Panc1 (cell line): ENCODE measurements at regions of chr6 and their contacts with region 1.

Region 1: DNA sequence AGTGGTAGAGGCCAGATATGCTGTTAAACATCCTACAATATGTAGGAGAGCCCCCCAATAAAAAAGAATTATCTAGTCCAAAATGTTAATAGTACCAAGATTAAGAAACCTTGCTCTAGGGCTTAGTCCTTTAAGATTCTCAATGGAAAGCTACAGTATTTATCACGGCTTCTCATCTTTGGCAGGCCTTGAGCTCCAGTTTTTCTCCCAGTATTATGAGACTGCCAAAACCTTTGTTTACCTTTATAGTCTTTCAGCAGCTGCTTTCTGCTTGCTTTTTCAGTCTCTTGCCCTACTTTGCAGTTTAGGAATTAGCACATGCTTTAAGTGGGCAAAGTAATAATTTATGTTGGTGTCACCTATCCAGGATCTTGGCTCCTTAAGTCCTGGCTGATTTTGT is 59.7 kb downstream of the NHLRC1 start:
- DNase-seq: no peak
- ATAC-seq: no peak
- H3K4me3 ChIP-seq: no peak overlapping the region
- H3K27ac ChIP-seq: no peak overlapping the region; the same call in 1 of the 2 replicates
- H3K4me1 ChIP-seq: no peaks in the 10 kb centered on the region; the same call in 1 of the 2 replicates
- H3K27me3 ChIP-seq: no peaks in the 10 kb centered on the region
- CTCF ChIP-seq: no peak

Region 2: DNA sequence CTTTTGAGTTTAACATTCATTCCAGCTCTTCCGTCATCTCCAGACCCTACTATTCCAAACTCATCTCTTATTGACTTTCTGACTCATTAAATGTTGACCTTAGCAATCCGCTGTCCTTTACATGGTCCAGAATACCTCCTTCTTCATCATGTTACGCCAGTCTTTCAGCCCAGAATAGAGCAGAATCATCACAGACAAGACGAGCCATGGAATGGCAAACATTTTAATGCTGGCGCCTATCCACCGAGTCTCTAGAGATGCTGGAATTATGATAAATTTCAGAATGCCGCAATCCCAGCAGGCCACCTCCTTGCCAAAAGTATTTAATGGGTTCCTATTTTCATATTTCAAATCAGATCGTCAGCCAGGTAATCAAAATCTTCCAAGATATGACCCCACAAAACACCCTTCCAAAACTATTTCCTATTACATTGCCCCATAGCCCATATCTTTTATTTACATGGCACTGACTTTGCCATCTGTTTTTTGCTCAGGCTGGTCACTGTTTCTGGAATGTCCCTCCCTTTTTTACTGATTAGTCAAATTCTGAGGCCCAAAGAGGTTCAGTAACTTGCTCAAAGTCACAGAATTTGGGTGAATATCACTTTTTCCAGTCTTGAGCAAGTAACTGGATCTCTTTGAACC is 18.8 kb after region 1 on chr6:
- CTCF ChIA-PET with region 1: no interaction called
- POLR2A ChIA-PET with region 1: no interaction called
- in situ Hi-C with region 1: no loop called
- intact Hi-C with region 1: loop called (anchors 1 kb)
- DNase-seq: no peak
- ATAC-seq: no peak
- H3K4me3 ChIP-seq: no peak overlapping the region
- H3K27ac ChIP-seq: no peak overlapping the region
- H3K4me1 ChIP-seq: no peaks in the 10 kb centered on the region
- H3K27me3 ChIP-seq: no peaks in the 10 kb centered on the region
- CTCF ChIP-seq: no peak

Region 3: DNA sequence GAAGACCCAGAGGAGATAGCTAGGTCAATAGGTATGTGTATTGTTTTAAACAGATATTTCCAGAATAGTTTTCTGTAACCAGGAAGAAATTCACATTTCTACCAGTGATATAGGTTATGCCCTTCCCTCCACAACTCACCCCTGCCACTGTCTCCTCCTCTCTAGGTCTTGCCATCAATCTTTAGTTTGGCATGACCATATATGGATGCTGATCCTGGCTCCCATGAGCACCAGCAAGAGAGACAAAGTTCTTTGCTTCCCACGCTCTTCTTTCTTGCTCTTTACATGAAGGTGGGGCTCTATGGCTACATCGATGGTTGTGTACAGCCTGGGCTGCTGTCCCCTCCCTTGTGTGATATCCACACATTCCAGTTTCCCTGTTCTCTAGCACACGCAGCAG is 1315.0 kb after region 1 on chr6:
- CTCF ChIA-PET with region 1: no interaction called
- POLR2A ChIA-PET with region 1: interaction called, 23 read pairs
- in situ Hi-C with region 1: no loop called
- intact Hi-C with region 1: no loop called
- DNase-seq: no peak
- ATAC-seq: no peak
- H3K4me3 ChIP-seq: no peak overlapping the region
- H3K27ac ChIP-seq: no peak overlapping the region
- H3K4me1 ChIP-seq: no peaks in the 10 kb centered on the region
- H3K27me3 ChIP-seq: no peaks in the 10 kb centered on the region
- CTCF ChIP-seq: no peak